HAP-1 (cell line): ENCODE measurements at regions of chr3 and their contacts with region 1.

Region 1: GRCh38 chr3:156024904-156025533 is 95.4 kb upstream of the KCNAB1 start:
- DNase-seq: no peak
- H3K4me3 ChIP-seq: no peak overlapping the region
- H3K4me1 ChIP-seq: no peaks in the 10 kb centered on the region
- H3K27me3 ChIP-seq: 0 out of 2 replicates have a peak, but pooled peaks cover 3% of the 10 kb centered on the region

Region 2: GRCh38 chr3:156449712-156450574 is 424.9 kb after region 1 on chr3:
- in situ Hi-C with region 1: no loop called
- DNase-seq: peak; percentile 31 to 37
- H3K4me3 ChIP-seq: no peak overlapping the region
- H3K4me1 ChIP-seq: no peaks in the 10 kb centered on the region
- H3K27me3 ChIP-seq: peaks cover 20% of the 10 kb centered on the region

Region 3: DNA sequence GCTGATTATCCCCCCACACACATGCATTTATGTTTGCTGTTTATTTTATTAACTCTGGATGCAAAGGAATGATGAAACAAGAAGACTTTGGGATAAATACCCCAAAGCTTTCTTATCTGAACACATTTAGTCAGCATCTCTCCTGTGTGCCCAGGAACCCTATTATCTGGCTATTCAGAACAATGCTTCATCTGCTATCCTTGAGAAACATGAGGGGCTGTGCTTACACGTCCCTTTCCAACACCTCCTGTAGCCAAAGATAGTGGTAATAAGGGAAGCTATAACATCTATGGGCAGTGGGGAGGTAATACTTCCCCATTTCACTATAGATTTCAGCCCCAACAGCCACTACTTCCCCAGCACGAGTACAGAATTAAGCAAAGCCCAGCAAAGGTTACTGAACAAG is 435.2 kb after region 1 on chr3:
- in situ Hi-C with region 1: no loop called
- DNase-seq: no peak
- H3K4me3 ChIP-seq: no peak overlapping the region
- H3K4me1 ChIP-seq: no peaks in the 10 kb centered on the region
- H3K27me3 ChIP-seq: peaks cover 40% of the 10 kb centered on the region

Region 4: DNA sequence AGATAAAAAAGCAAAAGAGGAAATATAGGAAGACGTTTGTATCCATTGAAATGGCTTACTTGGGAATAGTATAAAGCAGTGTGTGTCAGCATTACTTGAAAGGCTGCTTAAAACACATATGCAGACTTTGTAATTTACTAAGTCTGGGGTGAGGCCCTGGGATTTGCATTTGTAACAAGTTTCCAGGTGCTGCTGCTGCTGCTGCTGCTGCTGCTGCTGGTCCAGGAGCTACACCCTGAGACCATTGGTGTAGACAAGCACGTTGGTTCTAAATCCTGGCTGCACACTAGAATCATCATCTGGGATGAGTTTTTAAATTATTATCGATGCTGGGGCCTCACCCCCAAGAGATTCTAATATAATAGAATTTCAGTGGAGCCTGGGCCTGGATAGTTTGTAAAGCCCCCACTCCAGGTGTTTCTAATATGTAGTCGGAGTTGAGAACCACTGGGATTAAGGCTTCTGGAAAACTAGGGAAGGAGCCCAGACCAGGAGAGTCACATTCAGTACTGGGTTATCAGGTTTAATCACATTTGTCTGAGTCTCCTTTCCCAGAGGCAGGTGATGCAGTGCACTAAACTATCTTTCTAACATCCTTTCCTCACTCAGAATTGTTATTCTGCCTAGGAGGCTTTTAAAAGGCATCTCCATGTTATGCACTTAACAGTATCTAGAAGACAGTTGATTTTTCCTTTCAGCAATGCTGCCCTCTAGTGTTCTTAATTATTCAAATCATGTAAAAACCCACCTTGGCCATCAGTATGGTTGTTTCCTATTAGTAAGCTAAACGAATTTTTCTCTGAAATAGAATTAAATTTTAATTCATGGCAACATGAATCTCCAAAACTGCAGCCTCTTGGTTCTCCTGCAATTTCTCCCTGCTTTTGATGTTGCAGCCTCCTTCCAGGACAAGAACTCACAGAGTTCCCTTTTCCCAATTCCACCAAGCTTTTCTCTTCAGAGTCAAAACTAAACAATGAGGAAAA is 484.5 kb after region 1 on chr3:
- in situ Hi-C with region 1: loop called (anchors 25 kb)
- DNase-seq: peak in 1 of 2 experiments; percentile 47
- H3K4me3 ChIP-seq: no peak overlapping the region
- H3K4me1 ChIP-seq: no peaks in the 10 kb centered on the region
- H3K27me3 ChIP-seq: peaks cover 30% of the 10 kb centered on the region

Region 5: DNA sequence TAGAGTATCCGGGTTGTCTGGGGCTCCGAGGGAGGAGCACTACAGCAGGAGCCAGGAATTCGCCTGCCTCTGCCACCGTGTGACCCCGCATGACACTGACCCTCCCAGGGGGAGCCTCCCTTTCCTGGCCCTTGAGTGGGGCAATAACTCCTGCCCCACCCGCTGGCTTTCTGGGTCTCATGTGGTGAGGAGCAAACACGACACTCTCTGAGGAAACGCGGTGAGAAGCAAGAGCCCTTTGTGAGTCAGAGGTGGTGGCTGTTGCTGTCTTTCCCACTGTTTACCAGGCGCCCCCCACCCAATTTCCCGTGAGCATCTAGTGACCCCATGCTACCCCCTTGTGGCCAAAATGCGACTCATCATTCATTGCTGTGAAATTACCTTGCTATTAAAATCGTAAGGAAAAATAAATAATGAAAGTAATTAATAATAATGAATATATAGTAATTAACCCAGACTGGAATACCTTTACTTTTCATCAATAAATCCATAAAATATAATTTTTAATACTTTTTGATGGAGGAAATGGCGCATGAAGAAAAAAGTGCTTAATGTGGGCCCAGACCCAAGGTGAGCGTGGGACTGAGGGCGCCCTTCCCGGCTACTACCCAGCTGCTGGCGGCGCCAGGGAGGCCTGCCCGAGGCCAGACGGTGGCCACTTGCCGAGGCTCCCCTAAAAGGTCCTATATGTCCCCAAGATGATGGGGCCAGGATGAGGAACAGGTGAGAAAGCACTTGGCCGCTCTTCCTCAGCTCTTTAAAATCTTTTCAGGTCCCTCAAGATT is 1105.6 kb after region 1 on chr3:
- in situ Hi-C with region 1: loop called (anchors 25 kb)
- DNase-seq: peak; percentile 27 to 75
- H3K4me3 ChIP-seq: no peak overlapping the region
- H3K4me1 ChIP-seq: peaks cover 8% of the 10 kb centered on the region
- H3K27me3 ChIP-seq: no peaks in the 10 kb centered on the region